ENCODE measurements at regions of chr22 and their contacts with region 1.

Region 1: GRCh38 chr22:46377566-46378425 is 42.3 kb downstream of the TRMU start:
- DNase-seq: peak in 1 of 2 donors; percentile 46
- ATAC-seq: peak; percentile 22 to 81 (median 72)
- H3K4me3 ChIP-seq: no peak overlapping the region
- H3K27ac ChIP-seq: peak overlapping the region in 7 of 10 donors; percentile 2 to 55 (median 44)
- H3K4me1 ChIP-seq: peaks cover 0 to 15% (median 3%) of the 10 kb centered on the region in 9 donors
- H3K27me3 ChIP-seq: peaks cover 0 to 12% (median 0%) of the 10 kb centered on the region in 7 donors
- CTCF ChIP-seq: no peak

Region 2: GRCh38 chr22:46219636-46220035 is 158.2 kb before region 1 on chr22:
- intact Hi-C with region 1: no loop called
- DNase-seq: no peak
- ATAC-seq: no peak
- H3K4me3 ChIP-seq: no peak overlapping the region
- H3K27ac ChIP-seq: no peak overlapping the region
- H3K4me1 ChIP-seq: peaks cover 0 to 3% (median 0%) of the 10 kb centered on the region in 9 donors
- H3K27me3 ChIP-seq: no peaks in the 10 kb centered on the region
- CTCF ChIP-seq: no peak

Region 3: DNA sequence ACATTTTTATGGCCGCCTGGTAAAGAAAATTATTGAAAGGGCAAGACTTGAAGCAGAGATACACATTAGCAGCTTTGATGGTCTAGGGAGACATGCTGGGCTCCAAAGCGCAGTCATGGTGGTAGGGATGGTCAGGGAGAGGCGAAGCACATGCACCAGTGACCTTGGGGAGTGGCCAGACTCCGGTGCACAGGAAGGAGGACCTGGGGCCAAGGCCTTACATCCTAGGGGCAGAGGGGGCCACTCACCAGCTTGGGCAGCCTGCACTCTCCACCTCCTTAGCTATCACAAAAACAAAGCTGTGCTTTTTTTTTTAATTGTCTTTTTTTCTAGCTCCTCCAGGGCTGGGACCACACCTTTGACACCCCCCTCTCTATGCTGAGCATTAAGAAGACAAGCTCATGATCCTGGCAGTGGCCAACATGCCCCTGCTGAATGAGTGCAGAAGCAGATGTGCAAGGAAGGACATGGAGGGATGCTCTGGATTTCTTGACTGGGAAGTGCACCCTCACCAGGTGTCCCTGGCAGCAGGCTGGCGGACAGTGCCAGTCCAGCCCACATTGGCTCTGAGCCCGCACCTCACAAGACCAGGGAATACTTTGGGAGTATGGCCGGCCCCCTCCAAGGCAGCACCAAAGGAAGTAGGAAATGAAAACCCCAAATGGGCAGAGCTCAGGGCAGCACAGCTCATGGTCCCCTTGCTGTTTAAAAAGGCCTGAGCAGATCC is 1004.5 kb after region 1 on chr22:
- intact Hi-C with region 1: loop called in 1 of 10 experiments (anchors 5 kb)
- DNase-seq: no peak
- ATAC-seq: no peak
- H3K4me3 ChIP-seq: no peak overlapping the region
- H3K27ac ChIP-seq: no peak overlapping the region
- H3K4me1 ChIP-seq: no peaks in the 10 kb centered on the region
- H3K27me3 ChIP-seq: peaks cover 0 to 42% (median 23%) of the 10 kb centered on the region in 7 donors
- CTCF ChIP-seq: no peak

Measured in heart right ventricle (tissue), 16 donors.